IMR-90 (cell line): ENCODE measurements at regions of chr21 and their contacts with region 1.

Region 1: DNA sequence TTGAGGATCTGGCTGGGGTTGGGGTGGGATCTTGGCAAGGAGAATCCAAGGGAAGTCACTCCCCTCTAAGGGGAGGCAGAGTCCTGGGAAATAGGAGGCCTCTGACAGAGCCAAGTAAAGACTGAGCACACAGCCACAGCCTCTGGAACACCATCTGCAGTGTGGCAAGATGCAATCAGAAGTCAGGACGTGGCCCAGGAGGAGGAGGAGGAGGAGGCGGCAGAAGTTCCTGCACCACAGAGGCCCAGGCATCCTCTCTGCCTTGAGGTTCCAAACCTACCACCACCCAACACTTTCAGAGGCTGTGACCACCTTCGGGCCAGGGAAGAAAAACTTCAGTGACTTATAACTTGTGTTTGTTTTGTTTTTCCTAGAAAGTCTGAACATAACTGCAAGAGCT is 23.7 kb upstream of the KCNE2 start:
- DNase-seq: no peak
- ATAC-seq: no peak
- H3K4me3 ChIP-seq: no peak overlapping the region
- H3K27ac ChIP-seq: no peak overlapping the region
- H3K4me1 ChIP-seq: peaks cover 39% of the 10 kb centered on the region
- H3K27me3 ChIP-seq: no peaks in the 10 kb centered on the region; the same call in 1 of the 2 replicates
- CTCF ChIP-seq: no peak
- POLR2A ChIP-seq: no peak
- RAD21 ChIP-seq: no peak

Region 2: DNA sequence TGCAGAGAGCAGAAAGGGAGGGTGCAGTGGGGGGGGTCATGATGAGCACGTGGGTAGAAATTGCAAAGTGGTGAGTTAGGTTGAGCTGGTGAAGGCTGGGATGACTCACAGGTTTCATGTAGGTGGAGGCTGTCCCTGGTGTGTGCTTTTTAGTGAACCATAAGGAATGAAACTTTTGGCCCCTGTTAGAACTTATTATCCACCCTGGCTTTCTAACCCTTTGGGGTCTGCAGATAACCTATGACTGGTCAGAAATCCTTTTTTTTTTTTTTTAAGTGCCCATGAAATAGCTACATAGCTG is 1863.5 kb after region 1 on chr21:
- CTCF ChIA-PET with region 1: no interaction called
- POLR2A ChIA-PET with region 1: interaction called, 15 read pairs
- dilution Hi-C with region 1: no loop called
- in situ Hi-C with region 1: no loop called
- intact Hi-C with region 1: no loop called
- DNase-seq: peak; percentile 92
- ATAC-seq: peak; percentile 85
- H3K4me3 ChIP-seq: no peak overlapping the region
- H3K27ac ChIP-seq: no peak overlapping the region
- H3K4me1 ChIP-seq: peaks cover 26% of the 10 kb centered on the region
- H3K27me3 ChIP-seq: no peaks in the 10 kb centered on the region
- CTCF ChIP-seq: no peak
- POLR2A ChIP-seq: no peak
- RAD21 ChIP-seq: no peak